ENCODE measurements at regions of chr2 and their contacts with region 1.

Region 1: DNA sequence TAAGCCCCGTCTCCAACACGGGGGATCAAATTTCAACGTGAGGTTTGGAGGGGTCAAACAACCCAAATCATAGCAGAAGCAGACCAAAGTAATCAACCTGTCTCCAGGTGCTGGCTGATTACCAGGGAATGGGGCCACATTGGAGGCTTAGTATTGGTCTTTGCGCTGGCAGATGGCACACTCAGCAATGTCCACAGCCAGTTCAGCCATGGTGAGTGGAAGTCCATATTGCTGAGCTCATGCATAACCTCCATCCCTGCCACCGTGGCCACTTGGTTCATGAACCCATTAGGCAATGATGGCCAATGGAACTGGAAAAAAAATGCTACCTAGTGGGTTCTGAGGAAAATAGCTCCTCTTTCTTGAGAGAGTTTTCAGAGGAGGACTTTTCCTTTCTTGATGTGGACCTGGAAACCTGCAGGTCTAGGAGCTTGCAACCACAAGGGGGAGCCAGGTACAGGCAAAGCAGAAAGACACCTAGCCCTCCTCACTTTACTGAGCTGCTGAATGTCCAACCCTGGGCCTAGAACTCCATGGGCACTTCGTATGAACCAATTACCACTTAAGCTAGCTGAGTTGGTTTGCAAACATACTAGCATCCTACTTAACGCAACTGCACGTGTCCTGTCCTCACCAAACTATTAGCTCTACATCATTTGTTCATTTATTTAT is 128.0 kb upstream of the GYPC start:
- DNase-seq: peak; percentile 71
- H3K4me3 ChIP-seq: no peak overlapping the region
- H3K27ac ChIP-seq: no peak overlapping the region
- H3K4me1 ChIP-seq: no peaks in the 10 kb centered on the region
- H3K27me3 ChIP-seq: no peaks in the 10 kb centered on the region
- CTCF ChIP-seq: peak; percentile 51 to 60 (median 52)
- EP300 ChIP-seq: no peak
- POLR2A ChIP-seq: no peak

Region 2: GRCh38 chr2:126771501-126772195 is 243.7 kb after region 1 on chr2:
- in situ Hi-C with region 1: loop called in 3 of 4 experiments (anchors 5 to 10 kb)
- intact Hi-C with region 1: loop called (anchors 5 kb)
- DNase-seq: no peak
- H3K4me3 ChIP-seq: no peak overlapping the region
- H3K27ac ChIP-seq: no peak overlapping the region
- H3K4me1 ChIP-seq: peaks cover 0 to 5% (median 2%) of the 10 kb centered on the region in 4 donors
- H3K27me3 ChIP-seq: peaks cover 5% of the 10 kb centered on the region
- CTCF ChIP-seq: no peak
- EP300 ChIP-seq: no peak
- POLR2A ChIP-seq: no peak

Region 3: GRCh38 chr2:126776692-126777619 is 249.0 kb after region 1 on chr2:
- in situ Hi-C with region 1: loop called in 3 of 4 experiments (anchors 5 to 10 kb)
- intact Hi-C with region 1: loop called (anchors 5 kb)
- DNase-seq: peak; percentile 87
- H3K4me3 ChIP-seq: peak overlapping the region; percentile 40 to 72 (median 46)
- H3K27ac ChIP-seq: peak overlapping the region in 3 of 4 donors; percentile 11 to 51 (median 16)
- H3K4me1 ChIP-seq: peaks cover 0 to 11% (median 8%) of the 10 kb centered on the region in 4 donors
- H3K27me3 ChIP-seq: peaks cover 5% of the 10 kb centered on the region
- CTCF ChIP-seq: peak; percentile 88 to 94 (median 93)
- EP300 ChIP-seq: no peak
- POLR2A ChIP-seq: no peak